MCF 10A (cell line): ENCODE measurements at regions of chrX and their contacts with region 1.

Region 1: DNA sequence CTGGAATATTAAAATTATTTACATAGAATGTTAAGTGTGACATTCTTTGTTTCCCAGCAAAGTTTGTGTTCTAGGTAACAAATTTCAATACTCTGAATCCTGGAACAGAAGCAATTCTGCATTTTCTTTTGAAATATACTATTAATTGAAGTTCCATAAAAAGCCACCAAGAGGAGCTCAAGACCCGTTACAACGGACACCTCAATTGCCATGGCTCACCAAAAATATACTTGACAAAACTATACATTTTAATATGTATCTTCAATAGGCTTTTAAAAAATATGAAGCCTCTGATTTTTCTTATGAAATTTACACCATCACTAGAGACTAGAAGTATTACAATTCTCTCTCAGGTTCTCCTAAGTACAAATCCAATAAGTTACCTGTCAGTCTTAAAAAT is 111.4 kb downstream of the NYX start:
- DNase-seq: peak; percentile 31
- H3K4me3 Mint-ChIP-seq: no peak overlapping the region
- H3K27ac Mint-ChIP-seq: no peak overlapping the region
- H3K4me1 Mint-ChIP-seq: no peaks in the 10 kb centered on the region
- H3K27me3 Mint-ChIP-seq: peaks cover 46% of the 10 kb centered on the region
- CTCF ChIP-seq: peak; percentile 45

Region 2: GRCh38 chrX:41275661-41276609 is 282.6 kb before region 1 on chrX:
- CTCF ChIA-PET with region 1: no interaction called
- POLR2A ChIA-PET with region 1: no interaction called
- intact Hi-C with region 1: loop called (anchors 10 kb)
- DNase-seq: peak; percentile 57
- H3K4me3 Mint-ChIP-seq: peak overlapping the region; percentile 68
- H3K27ac Mint-ChIP-seq: no peak overlapping the region
- H3K4me1 Mint-ChIP-seq: no peaks in the 10 kb centered on the region
- H3K27me3 Mint-ChIP-seq: peaks cover 37% of the 10 kb centered on the region
- CTCF ChIP-seq: peak; percentile 55

Region 3: DNA sequence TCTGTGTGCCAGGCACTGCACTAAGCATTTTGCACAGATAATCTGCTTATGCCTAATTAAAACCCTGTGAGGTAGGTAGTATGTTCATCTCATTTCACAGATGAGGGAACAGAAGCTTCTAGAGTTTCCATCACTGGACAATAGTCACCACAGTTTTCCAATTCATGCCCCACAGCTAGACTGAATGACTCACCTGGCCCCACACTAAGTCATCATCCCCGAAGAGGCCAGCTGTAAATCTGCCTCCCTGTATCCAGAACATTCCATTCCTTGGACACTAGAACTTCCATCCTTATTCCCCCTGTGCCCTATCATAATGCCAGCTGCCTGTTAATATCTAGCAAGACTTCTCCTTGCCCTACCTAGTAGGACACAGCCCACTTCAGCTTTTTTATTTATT is 152.3 kb before region 1 on chrX:
- CTCF ChIA-PET with region 1: no interaction called
- POLR2A ChIA-PET with region 1: no interaction called
- intact Hi-C with region 1: no loop called
- DNase-seq: peak; percentile 58
- H3K4me3 Mint-ChIP-seq: no peak overlapping the region
- H3K27ac Mint-ChIP-seq: no peak overlapping the region
- H3K4me1 Mint-ChIP-seq: peaks cover 6% of the 10 kb centered on the region
- H3K27me3 Mint-ChIP-seq: peaks cover 22% of the 10 kb centered on the region
- CTCF ChIP-seq: no peak

Region 4: GRCh38 chrX:41734530-41734929 is 176.0 kb after region 1 on chrX:
- CTCF ChIA-PET with region 1: interaction called, 3 read pairs
- POLR2A ChIA-PET with region 1: no interaction called
- intact Hi-C with region 1: loop called (anchors 1 kb)
- DNase-seq: peak; percentile 16
- H3K4me3 Mint-ChIP-seq: no peak overlapping the region
- H3K27ac Mint-ChIP-seq: no peak overlapping the region
- H3K4me1 Mint-ChIP-seq: no peaks in the 10 kb centered on the region
- H3K27me3 Mint-ChIP-seq: peaks cover 41% of the 10 kb centered on the region
- CTCF ChIP-seq: peak; percentile 34

Region 5: GRCh38 chrX:41759817-41760216 is 201.3 kb after region 1 on chrX:
- CTCF ChIA-PET with region 1: no interaction called
- POLR2A ChIA-PET with region 1: no interaction called
- intact Hi-C with region 1: loop called (anchors 2 kb)
- DNase-seq: peak; percentile 40
- H3K4me3 Mint-ChIP-seq: no peak overlapping the region
- H3K27ac Mint-ChIP-seq: no peak overlapping the region
- H3K4me1 Mint-ChIP-seq: no peaks in the 10 kb centered on the region
- H3K27me3 Mint-ChIP-seq: peaks cover 44% of the 10 kb centered on the region
- CTCF ChIP-seq: peak; percentile 38

Region 6: GRCh38 chrX:41946989-41947612 is 388.6 kb after region 1 on chrX:
- CTCF ChIA-PET with region 1: no interaction called
- POLR2A ChIA-PET with region 1: no interaction called
- intact Hi-C with region 1: no loop called
- DNase-seq: no peak
- H3K4me3 Mint-ChIP-seq: no peak overlapping the region
- H3K27ac Mint-ChIP-seq: no peak overlapping the region
- H3K4me1 Mint-ChIP-seq: no peaks in the 10 kb centered on the region
- H3K27me3 Mint-ChIP-seq: peaks cover 53% of the 10 kb centered on the region
- CTCF ChIP-seq: no peak